PC-3 (cell line): ENCODE measurements at regions of chr2 and their contacts with region 1.

Region 1: GRCh38 chr2:164560181-164560792 is 61.0 kb downstream of the GRB14 start:
- DNase-seq: peak; percentile 60
- ATAC-seq: no peak
- H3K4me3 ChIP-seq: no peak overlapping the region
- H3K27ac ChIP-seq: no peak overlapping the region
- H3K4me1 ChIP-seq: no peaks in the 10 kb centered on the region
- H3K27me3 ChIP-seq: peaks cover 72% of the 10 kb centered on the region
- CTCF ChIP-seq: peak; percentile 79

Region 2: GRCh38 chr2:164252568-164253287 is 307.6 kb before region 1 on chr2:
- CTCF ChIA-PET with region 1: no interaction called
- POLR2A ChIA-PET with region 1: no interaction called
- intact Hi-C with region 1: no loop called
- DNase-seq: no peak
- ATAC-seq: no peak
- H3K4me3 ChIP-seq: no peak overlapping the region
- H3K27ac ChIP-seq: no peak overlapping the region
- H3K4me1 ChIP-seq: no peaks in the 10 kb centered on the region
- H3K27me3 ChIP-seq: peaks cover 48% of the 10 kb centered on the region
- CTCF ChIP-seq: no peak

Region 3: DNA sequence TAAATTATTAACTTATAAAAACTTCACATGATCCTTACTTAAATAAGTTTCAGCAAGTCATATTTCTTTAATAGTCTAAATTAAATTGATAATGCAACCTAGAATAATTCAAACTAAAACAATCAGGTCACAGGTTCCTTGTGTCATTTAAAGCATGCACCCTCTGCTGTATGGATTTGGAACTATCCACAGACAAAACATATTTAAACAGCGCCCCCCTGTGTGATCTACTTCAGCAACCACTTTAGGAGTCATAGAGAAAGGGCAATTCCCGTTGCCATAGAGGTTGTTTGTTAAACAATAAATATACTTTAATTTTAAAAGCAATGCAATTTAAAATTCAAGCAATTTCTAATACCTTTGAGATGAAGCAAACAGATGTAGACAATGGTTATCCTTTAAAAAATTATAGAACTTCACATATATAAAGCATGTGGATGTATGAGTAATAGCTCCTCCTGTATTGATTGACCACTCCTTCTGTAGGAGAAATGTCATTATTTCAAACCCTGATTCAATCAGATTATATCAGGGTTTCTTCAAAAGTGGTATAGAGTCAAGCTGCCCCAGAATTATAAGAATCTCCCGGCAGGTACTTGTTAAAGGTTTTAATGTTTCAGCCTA is 39.8 kb after region 1 on chr2:
- CTCF ChIA-PET with region 1: interaction called, 6 read pairs
- POLR2A ChIA-PET with region 1: no interaction called
- intact Hi-C with region 1: loop called (anchors 2 kb)
- DNase-seq: peak; percentile 78
- ATAC-seq: peak; percentile 86
- H3K4me3 ChIP-seq: no peak overlapping the region
- H3K27ac ChIP-seq: no peak overlapping the region
- H3K4me1 ChIP-seq: no peaks in the 10 kb centered on the region
- H3K27me3 ChIP-seq: peaks cover 35% of the 10 kb centered on the region
- CTCF ChIP-seq: peak; percentile 99